K562 (cell line): ENCODE measurements at regions of chr10 and their contacts with region 1.

Region 1: DNA sequence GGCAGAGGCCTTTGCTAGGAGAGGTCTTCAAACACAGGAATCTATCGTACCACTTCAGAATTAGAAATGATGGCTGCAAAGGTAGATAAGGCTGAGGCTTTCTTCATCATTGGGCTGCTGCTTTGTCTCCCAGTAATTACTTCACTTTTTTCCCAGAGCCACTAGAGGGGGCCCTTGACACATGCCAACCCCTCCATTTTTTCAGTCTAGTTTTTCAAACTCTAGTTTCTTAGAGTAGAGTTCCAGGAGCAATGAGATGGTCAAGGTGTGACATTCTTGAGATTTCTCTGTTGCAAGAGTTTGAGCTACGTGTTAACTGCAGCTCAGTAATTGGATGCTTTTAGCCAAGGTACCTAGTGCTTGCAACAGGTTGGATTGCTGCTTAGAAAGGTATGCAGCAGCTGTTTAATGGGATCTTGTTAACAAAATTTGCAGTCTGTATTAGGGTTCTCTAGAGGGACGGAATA is 33.8 kb upstream of the RBM20 start:
- DNase-seq: peak; percentile 65 to 84 (median 69)
- ATAC-seq: peak; percentile 83
- H3K4me3 ChIP-seq: no peak overlapping the region
- H3K27ac ChIP-seq: no peak overlapping the region; the same call in 2 of the 3 replicates
- H3K4me1 ChIP-seq: peaks cover 11 to 16% of the 10 kb centered on the region in 2 experiments; a peak in 3 of 5 replicates
- H3K27me3 ChIP-seq: no peaks in the 10 kb centered on the region
- CTCF ChIP-seq: peak; percentile 71 to 91 (median 84)
- EP300 ChIP-seq: peak; percentile 56
- POLR2A ChIP-seq: no peak
- RAD21 ChIP-seq: peak; percentile 75 to 83

Region 2: DNA sequence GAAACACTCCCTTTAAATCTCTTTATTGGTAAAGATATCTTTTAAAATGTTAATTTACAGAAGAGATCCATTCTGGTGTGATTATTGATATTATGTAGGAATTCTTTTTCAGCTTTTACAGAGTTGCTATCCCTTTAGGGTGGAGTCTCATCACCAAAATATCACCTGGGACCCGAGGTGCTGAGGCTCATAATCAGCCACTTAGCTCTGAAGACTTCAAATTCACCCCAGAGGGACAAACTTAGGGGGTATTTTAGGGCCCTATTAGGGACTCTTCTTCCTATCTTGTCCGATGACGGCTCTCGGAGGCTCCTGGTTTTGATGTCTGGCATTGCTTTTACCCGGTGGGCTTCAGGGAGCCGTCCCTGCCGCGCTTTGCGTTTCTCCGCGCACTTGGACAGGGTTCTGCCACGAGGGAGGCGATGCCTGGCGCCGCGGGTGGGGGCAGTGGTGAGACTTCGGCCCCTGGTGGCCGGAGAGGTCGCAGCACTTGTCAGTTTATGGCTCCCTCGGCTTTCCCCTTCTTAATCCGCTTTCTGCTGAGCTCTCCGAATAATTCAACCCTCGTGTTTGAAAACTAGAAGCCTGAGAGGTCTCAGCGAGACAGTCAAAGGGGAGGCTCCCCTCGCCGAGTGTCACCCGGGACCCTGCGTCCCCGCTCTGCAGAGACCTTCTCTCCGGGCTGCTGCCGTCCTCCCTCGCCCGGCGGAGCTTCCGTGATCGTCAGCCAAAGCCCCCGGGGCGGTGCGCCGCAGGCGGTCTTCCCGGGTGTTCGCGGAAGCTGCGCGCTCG is 61.6 kb after region 1 on chr10:
- CTCF ChIA-PET with region 1: no interaction called
- POLR2A ChIA-PET with region 1: interaction called, 3 read pairs
- in situ Hi-C with region 1: loop called (anchors 10 kb)
- intact Hi-C with region 1: loop called (anchors 2 kb)
- DNase-seq: peak; percentile 78 to 85 (median 80)
- ATAC-seq: peak; percentile 94
- H3K4me3 ChIP-seq: peak overlapping the region; percentile 59
- H3K27ac ChIP-seq: peak overlapping the region; percentile 91
- H3K4me1 ChIP-seq: peaks cover 12 to 26% of the 10 kb centered on the region in 2 experiments; a peak in 4 of 5 replicates
- H3K27me3 ChIP-seq: no peaks in the 10 kb centered on the region
- CTCF ChIP-seq: peak; percentile 96 to 99 (median 99)
- EP300 ChIP-seq: no peak
- POLR2A ChIP-seq: peak; percentile 70
- RAD21 ChIP-seq: peak in 1 of 2 experiments; percentile 63; a peak in 3 of 4 replicates

Region 3: DNA sequence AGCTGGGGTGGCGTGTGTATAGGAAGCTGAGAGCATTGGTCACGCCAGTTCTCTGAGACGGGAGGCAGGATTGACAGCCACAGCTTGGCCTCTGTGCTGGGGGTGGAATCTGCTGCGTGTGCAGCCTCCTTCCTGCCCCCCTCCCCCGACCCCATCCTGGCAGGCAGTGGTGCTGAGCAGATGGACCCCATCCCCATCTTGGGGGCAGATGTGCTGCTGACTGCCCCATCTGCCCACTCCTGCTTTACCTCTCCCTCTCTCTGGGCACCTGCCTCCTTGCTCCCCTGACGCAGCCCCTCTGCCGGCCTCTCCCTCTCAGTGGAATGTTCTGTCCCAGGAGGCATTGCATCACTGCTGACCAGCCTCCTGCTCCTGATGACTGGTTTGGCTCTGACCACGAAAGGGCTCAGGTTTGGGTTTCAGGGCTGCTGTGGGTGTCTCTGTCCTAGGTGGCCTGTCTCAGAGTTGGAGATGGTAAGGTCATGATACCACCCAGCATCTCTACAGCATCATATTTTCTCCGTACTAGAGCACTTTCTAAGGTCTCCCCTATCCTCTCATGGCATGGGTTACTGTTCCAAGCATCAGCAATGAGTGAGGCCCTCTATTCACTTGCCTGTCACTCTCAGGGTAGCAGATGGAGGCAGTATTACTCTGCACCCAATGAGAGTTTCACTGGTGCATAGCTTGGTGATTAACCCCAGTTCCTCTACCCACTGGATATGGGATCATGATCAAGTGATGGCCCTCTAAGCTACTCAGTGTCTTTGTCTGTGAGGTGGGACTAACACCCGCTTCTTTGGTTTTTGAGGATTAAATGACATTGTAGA is 115.7 kb after region 1 on chr10:
- CTCF ChIA-PET with region 1: no interaction called
- POLR2A ChIA-PET with region 1: no interaction called
- in situ Hi-C with region 1: no loop called
- intact Hi-C with region 1: loop called (anchors 5 kb)
- DNase-seq: no peak
- ATAC-seq: peak; percentile 65
- H3K4me3 ChIP-seq: no peak overlapping the region
- H3K27ac ChIP-seq: no peak overlapping the region
- H3K4me1 ChIP-seq: peaks cover 0 to 3% of the 10 kb centered on the region in 2 experiments; a peak in 1 of 5 replicates
- H3K27me3 ChIP-seq: no peaks in the 10 kb centered on the region
- CTCF ChIP-seq: no peak
- EP300 ChIP-seq: no peak
- POLR2A ChIP-seq: no peak
- RAD21 ChIP-seq: no peak

Region 4: DNA sequence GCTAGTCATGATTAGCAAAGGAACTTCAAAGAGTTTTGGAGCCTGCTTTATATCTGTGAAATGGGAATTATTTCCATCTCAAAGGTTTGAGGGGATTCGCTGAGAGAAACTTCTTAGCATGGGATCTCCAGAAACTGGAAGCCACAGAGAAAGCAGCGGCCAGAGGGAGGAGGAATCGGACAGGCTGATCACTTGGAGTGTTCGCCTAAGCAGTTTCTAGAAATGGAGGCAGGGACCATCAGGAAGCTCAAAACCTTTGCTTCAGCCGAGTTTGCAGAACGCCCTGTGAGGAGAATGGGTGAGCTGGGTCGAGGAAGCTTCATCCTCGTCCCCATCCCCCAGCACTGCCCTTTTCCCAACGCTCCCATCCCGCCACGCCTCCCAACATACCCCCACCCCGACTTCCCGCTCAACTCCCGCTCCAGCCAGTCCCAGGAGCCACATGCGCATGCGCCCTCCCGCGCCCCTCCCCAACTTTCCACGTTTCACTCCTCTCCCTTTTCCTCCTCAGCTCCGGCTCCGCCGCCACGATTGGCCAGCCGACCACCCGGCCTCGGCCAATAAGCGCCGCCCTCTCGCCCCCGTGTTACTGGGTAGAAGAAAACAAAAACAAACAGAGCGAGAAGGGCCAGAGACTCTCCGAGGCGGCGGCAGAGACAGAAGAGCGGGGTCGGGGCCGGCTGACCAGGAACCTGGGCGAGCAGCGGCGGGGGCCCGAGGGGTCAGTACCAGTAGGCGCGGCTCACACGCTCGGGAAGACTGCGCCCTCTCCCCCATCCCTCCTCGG is 261.1 kb after region 1 on chr10 and contains the start of gene PDCD4:
- CTCF ChIA-PET with region 1: no interaction called
- POLR2A ChIA-PET with region 1: no interaction called
- in situ Hi-C with region 1: loop called (anchors 25 kb)
- intact Hi-C with region 1: loop called (anchors 10 kb)
- DNase-seq: peak; percentile 89 to 97 (median 92)
- ATAC-seq: peak; percentile 86
- H3K4me3 ChIP-seq: peak within 1 kb of the TSS; percentile 64
- H3K27ac ChIP-seq: peak within 1 kb of the TSS; percentile 83
- H3K4me1 ChIP-seq: peaks cover 15 to 26% of the 10 kb centered on the region in 2 experiments
- H3K27me3 ChIP-seq: no peaks in the 10 kb centered on the region
- CTCF ChIP-seq: no peak
- EP300 ChIP-seq: peak; percentile 3; the same call in 1 of the 2 replicates
- POLR2A ChIP-seq: peak; percentile 72
- RAD21 ChIP-seq: no peak
- polyA plus RNA-seq, gene PDCD4: 12.9 to 18.1 TPM

Region 5: DNA sequence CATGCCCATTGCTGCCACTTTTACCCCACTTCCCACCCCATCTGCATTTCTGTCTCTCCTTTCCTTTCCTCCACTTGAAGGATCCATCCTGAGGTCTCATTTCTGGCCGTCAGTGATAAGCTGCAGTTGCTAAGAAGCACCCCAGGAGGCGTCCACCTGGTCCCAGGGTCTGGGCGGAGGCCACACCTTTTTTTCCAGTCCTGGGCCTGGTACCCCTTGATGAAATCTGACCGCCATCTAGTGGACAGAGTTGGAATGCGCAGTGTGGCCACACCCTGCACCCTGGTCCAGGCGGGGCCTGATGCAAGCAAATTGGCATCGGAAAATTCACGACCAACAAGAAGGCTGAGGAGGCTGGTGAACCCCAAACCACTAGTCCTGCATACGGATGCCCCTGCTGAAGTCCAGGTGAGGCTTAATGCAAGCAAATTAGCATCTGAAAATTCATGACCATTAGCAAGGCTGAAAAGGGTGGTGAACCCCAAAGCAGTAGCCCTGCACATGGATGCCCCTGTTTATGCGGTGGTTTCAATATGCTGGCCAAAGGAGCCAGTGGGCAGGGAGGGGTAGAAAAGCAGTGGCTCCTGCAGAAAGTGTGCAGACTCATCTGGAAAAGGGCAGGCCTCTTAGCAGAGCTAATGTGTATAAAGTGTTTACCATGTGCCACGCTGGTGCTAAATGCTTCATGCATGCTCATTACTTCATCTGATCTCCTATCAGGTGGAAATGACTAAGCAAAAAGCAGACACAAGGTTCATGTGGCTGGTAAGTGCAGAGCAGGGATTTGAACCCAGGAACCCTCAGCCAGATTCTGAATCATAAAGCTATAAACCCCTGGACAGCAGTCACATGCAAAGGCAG is 1530.0 kb after region 1 on chr10:
- CTCF ChIA-PET with region 1: no interaction called
- POLR2A ChIA-PET with region 1: no interaction called
- in situ Hi-C with region 1: no loop called
- intact Hi-C with region 1: loop called (anchors 10 kb)
- DNase-seq: peak; percentile 84 to 88 (median 86)
- ATAC-seq: peak; percentile 99
- H3K4me3 ChIP-seq: no peak overlapping the region
- H3K27ac ChIP-seq: no peak overlapping the region
- H3K4me1 ChIP-seq: no peaks in the 10 kb centered on the region; a peak in 2 of 5 replicates
- H3K27me3 ChIP-seq: peaks cover 0 to 16% of the 10 kb centered on the region in 2 experiments; a peak in 2 of 5 replicates
- CTCF ChIP-seq: peak; percentile 91 to 94 (median 93)
- EP300 ChIP-seq: no peak
- POLR2A ChIP-seq: no peak
- RAD21 ChIP-seq: peak; percentile 42 to 71